GM12878 (cell line): ENCODE measurements at regions of chr19 and their contacts with region 1.

Region 1: DNA sequence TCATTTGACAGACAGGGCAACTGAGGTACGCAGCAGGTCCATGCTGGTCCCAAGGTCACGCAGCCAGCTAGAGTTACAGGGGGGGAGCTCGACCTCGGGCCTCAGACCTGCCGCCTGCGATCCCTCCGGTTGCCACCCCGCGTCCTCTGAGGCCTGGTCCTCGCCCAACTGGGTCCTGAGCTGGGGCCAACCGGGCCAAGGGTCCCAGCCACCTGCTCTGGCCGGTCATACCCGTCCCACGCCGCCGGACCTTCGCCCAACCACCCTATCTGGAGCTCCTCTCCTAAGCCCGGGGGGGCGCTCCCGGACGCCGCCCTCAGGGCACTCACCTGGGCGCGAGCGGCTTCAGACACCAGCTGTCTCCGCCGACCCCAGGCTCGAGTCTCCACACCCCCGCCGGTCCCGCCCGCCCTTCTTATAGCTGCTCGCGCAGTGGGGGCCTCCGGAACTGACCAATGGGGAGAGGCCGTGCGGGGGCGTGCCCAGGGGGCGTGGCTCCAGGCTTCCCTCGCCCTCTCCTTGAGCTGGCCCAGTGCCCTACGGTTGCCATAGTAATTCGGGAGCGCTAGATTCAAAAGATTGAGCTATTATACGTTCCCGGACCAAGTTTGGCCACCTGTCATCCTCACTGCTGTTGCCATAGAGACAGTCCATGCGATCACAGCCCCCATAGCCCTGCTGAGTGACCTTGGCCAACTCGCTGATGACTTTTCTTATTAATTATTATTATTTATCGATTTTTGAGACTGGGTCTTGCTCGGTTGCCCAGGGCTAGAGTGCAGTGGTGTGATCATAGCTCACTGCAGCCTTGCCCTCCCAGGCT is at the start of gene PLIN5:
- DNase-seq: peak; percentile 3
- ATAC-seq: peak; percentile 81
- H3K4me3 ChIP-seq: no peak within 1 kb of the TSS
- H3K27ac ChIP-seq: no peak within 1 kb of the TSS
- H3K4me1 ChIP-seq: peaks cover 12% of the 10 kb centered on the region
- H3K27me3 ChIP-seq: no peaks in the 10 kb centered on the region; a peak in 1 of 4 replicates
- CTCF ChIP-seq: no peak
- EP300 ChIP-seq: no peak
- POLR2A ChIP-seq: no peak
- RAD21 ChIP-seq: no peak
- polyA plus RNA-seq, gene PLIN5: not detected

Region 2: GRCh38 chr19:4524808-4525562 is 10.1 kb before region 1 on chr19:
- CTCF ChIA-PET with region 1: interaction called, 44 read pairs
- POLR2A ChIA-PET with region 1: no interaction called
- RAD21 ChIA-PET with region 1: interaction called, 3 read pairs
- SMC1A ChIA-PET with region 1: interaction called, 4 read pairs
- in situ Hi-C with region 1: no loop called
- intact Hi-C with region 1: no loop called
- DNase-seq: no peak
- ATAC-seq: peak; percentile 93
- H3K4me3 ChIP-seq: no peak overlapping the region
- H3K27ac ChIP-seq: no peak overlapping the region
- H3K4me1 ChIP-seq: no peaks in the 10 kb centered on the region
- H3K27me3 ChIP-seq: no peaks in the 10 kb centered on the region
- CTCF ChIP-seq: peak; percentile 65 to 91 (median 77)
- EP300 ChIP-seq: no peak
- POLR2A ChIP-seq: no peak
- RAD21 ChIP-seq: peak; percentile 43

Region 3: GRCh38 chr19:4576016-4576933 is 41.2 kb after region 1 on chr19:
- CTCF ChIA-PET with region 1: no interaction called
- POLR2A ChIA-PET with region 1: no interaction called
- RAD21 ChIA-PET with region 1: no interaction called
- SMC1A ChIA-PET with region 1: no interaction called
- in situ Hi-C with region 1: no loop called
- intact Hi-C with region 1: no loop called
- DNase-seq: no peak
- ATAC-seq: peak; percentile 83
- H3K4me3 ChIP-seq: no peak overlapping the region
- H3K27ac ChIP-seq: no peak overlapping the region
- H3K4me1 ChIP-seq: no peaks in the 10 kb centered on the region
- H3K27me3 ChIP-seq: peaks cover 2 to 4% of the 10 kb centered on the region in 2 experiments
- CTCF ChIP-seq: peak; percentile 66 to 80 (median 74)
- EP300 ChIP-seq: no peak
- POLR2A ChIP-seq: no peak
- RAD21 ChIP-seq: peak; percentile 57

Region 4: DNA sequence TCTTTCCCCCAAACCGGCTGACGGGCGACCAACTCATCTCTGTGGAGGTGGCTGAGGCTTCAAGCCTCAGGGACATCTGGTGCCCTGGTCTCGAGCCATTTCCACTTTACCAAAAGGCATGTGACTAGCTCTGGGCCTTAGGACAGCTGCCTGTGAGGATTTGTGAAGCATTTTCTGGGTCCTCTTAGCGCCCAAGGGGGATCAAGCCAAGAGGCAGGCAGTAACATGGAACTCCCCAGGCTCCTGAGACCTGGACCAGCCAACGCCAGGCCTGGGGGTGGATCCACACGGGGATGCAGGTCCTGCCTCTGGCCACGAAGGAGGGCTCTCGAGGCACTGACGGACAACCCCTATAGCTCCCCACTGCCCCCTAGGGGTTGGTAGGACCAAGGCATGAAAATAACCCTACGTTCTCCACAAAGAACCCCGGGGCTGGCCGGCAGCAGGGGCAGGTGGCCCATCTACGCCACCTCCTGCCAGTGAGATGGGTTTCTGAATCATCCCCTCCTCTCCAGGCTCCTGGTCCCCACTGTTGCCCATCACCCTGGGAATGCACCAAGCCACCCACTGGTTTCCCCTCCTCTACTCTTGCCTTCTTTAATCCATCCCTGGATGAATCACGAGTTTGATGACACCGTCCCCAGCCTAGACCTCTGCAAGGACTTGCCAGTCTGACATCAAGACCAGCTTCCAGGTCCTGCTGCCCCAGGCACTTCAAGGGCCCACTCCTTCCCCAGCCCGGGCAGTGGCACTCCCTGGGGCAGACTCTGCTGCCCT is 142.1 kb after region 1 on chr19:
- CTCF ChIA-PET with region 1: no interaction called
- POLR2A ChIA-PET with region 1: no interaction called
- RAD21 ChIA-PET with region 1: no interaction called
- SMC1A ChIA-PET with region 1: no interaction called
- in situ Hi-C with region 1: no loop called
- intact Hi-C with region 1: no loop called
- DNase-seq: no peak
- ATAC-seq: peak; percentile 72
- H3K4me3 ChIP-seq: no peak overlapping the region
- H3K27ac ChIP-seq: no peak overlapping the region
- H3K4me1 ChIP-seq: no peaks in the 10 kb centered on the region
- H3K27me3 ChIP-seq: no peaks in the 10 kb centered on the region
- CTCF ChIP-seq: peak; percentile 21 to 64 (median 44); a peak in 5 of 6 replicates
- EP300 ChIP-seq: no peak
- POLR2A ChIP-seq: no peak
- RAD21 ChIP-seq: no peak